ENCODE measurements at regions of chr11 and their contacts with region 1.

Region 1: DNA sequence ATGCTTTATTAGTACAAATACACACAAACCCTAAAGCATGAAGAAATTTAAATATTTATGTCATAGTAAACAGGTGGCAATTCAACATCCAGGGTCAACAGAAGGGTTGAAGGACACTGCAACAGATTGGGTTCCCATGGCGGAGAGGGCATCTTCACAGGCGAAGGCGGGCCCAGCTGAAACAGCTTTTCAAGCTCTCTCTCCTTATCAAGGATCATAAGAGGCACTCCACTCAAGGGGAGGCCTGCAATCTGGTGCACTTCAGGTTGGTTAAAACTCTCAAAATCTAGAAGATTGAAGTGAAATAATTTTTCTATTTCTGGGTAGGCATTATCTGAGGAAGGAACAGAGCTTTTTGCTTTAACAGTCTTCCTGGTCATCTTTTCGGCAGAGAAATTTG is 16.8 kb upstream of the SLC22A8 start:
- DNase-seq: no peak
- ATAC-seq: no peak
- H3K4me3 ChIP-seq: no peak overlapping the region
- H3K27ac ChIP-seq: no peak overlapping the region
- H3K4me1 ChIP-seq: no peaks in the 10 kb centered on the region
- H3K27me3 ChIP-seq: no peaks in the 10 kb centered on the region
- CTCF ChIP-seq: no peak

Region 2: DNA sequence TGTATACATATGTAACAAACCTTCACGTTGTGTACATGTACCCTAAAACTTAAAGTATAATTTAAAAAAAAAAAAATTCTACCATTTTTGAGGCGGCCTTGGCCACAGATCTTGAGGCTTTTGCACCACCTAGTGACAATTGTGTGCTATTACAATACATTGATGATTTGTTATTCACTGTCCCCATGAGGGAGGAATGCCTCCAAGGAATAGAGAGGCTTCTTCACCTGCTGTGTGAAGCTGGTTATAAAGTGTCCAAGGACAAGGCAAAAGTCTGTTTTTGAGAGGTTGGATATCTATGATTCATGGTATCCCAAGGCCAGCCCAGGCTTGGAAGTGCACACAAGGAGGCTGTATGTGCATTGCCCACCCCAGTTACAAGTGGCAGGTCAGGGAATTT is 180.3 kb after region 1 on chr11:
- CTCF ChIA-PET with region 1: no interaction called
- POLR2A ChIA-PET with region 1: no interaction called
- in situ Hi-C with region 1: no loop called
- intact Hi-C with region 1: loop called (anchors 2 kb)
- DNase-seq: no peak
- ATAC-seq: peak; percentile 70
- H3K4me3 ChIP-seq: no peak overlapping the region
- H3K27ac ChIP-seq: no peak overlapping the region
- H3K4me1 ChIP-seq: no peaks in the 10 kb centered on the region
- H3K27me3 ChIP-seq: peaks cover 4% of the 10 kb centered on the region; the same call in 1 of the 2 replicates
- CTCF ChIP-seq: peak; percentile 80